ENCODE measurements at regions of chr7 and their contacts with region 1.

Region 1: GRCh38 chr7:2437136-2437831 is 33.9 kb downstream of the CHST12 start:
- DNase-seq: no peak
- H3K4me3 ChIP-seq: no peak overlapping the region
- H3K27ac ChIP-seq: no peak overlapping the region
- H3K4me1 ChIP-seq: no peaks in the 10 kb centered on the region
- H3K27me3 ChIP-seq: no peaks in the 10 kb centered on the region
- CTCF ChIP-seq: no peak

Region 2: GRCh38 chr7:2360796-2361195 is 76.5 kb before region 1 on chr7:
- CTCF ChIA-PET with region 1: no interaction called
- dilution Hi-C with region 1: loop called (anchors 5 kb)
- in situ Hi-C with region 1: no loop called
- intact Hi-C with region 1: no loop called
- DNase-seq: peak; percentile 83
- H3K4me3 ChIP-seq: no peak overlapping the region
- H3K27ac ChIP-seq: peak overlapping the region; percentile 86
- H3K4me1 ChIP-seq: peaks cover 28% of the 10 kb centered on the region
- H3K27me3 ChIP-seq: no peaks in the 10 kb centered on the region
- CTCF ChIP-seq: no peak

Region 3: GRCh38 chr7:2462731-2463130 is 25.4 kb after region 1 on chr7:
- CTCF ChIA-PET with region 1: no interaction called
- dilution Hi-C with region 1: no loop called
- in situ Hi-C with region 1: no loop called
- intact Hi-C with region 1: no loop called
- DNase-seq: no peak
- H3K4me3 ChIP-seq: no peak overlapping the region
- H3K27ac ChIP-seq: no peak overlapping the region
- H3K4me1 ChIP-seq: no peaks in the 10 kb centered on the region
- H3K27me3 ChIP-seq: peaks cover 2% of the 10 kb centered on the region
- CTCF ChIP-seq: no peak

Region 4: GRCh38 chr7:2482725-2483451 is 45.6 kb after region 1 on chr7:
- CTCF ChIA-PET with region 1: no interaction called
- dilution Hi-C with region 1: loop called (anchors 5 kb)
- in situ Hi-C with region 1: no loop called
- intact Hi-C with region 1: no loop called
- DNase-seq: no peak
- H3K4me3 ChIP-seq: no peak overlapping the region
- H3K27ac ChIP-seq: no peak overlapping the region
- H3K4me1 ChIP-seq: peaks cover 10% of the 10 kb centered on the region
- H3K27me3 ChIP-seq: no peaks in the 10 kb centered on the region
- CTCF ChIP-seq: no peak

Region 5: GRCh38 chr7:2523941-2524807 is 86.9 kb after region 1 on chr7:
- CTCF ChIA-PET with region 1: no interaction called
- dilution Hi-C with region 1: no loop called
- in situ Hi-C with region 1: no loop called
- intact Hi-C with region 1: no loop called
- DNase-seq: peak; percentile 76
- H3K4me3 ChIP-seq: peak overlapping the region; percentile 5 to 30 (median 29)
- H3K27ac ChIP-seq: peak overlapping the region; percentile 82
- H3K4me1 ChIP-seq: peaks cover 68% of the 10 kb centered on the region
- H3K27me3 ChIP-seq: no peaks in the 10 kb centered on the region
- CTCF ChIP-seq: no peak

Region 6: GRCh38 chr7:2698581-2699288 is 261.5 kb after region 1 on chr7:
- CTCF ChIA-PET with region 1: no interaction called
- dilution Hi-C with region 1: loop called (anchors 5 kb)
- in situ Hi-C with region 1: no loop called
- intact Hi-C with region 1: no loop called
- DNase-seq: no peak
- H3K4me3 ChIP-seq: no peak overlapping the region
- H3K27ac ChIP-seq: no peak overlapping the region
- H3K4me1 ChIP-seq: no peaks in the 10 kb centered on the region
- H3K27me3 ChIP-seq: no peaks in the 10 kb centered on the region
- CTCF ChIP-seq: no peak

Measured in mammary epithelial cell (primary cell).